H1 (cell line): ENCODE measurements at regions of chr6 and their contacts with region 1.

Region 1: DNA sequence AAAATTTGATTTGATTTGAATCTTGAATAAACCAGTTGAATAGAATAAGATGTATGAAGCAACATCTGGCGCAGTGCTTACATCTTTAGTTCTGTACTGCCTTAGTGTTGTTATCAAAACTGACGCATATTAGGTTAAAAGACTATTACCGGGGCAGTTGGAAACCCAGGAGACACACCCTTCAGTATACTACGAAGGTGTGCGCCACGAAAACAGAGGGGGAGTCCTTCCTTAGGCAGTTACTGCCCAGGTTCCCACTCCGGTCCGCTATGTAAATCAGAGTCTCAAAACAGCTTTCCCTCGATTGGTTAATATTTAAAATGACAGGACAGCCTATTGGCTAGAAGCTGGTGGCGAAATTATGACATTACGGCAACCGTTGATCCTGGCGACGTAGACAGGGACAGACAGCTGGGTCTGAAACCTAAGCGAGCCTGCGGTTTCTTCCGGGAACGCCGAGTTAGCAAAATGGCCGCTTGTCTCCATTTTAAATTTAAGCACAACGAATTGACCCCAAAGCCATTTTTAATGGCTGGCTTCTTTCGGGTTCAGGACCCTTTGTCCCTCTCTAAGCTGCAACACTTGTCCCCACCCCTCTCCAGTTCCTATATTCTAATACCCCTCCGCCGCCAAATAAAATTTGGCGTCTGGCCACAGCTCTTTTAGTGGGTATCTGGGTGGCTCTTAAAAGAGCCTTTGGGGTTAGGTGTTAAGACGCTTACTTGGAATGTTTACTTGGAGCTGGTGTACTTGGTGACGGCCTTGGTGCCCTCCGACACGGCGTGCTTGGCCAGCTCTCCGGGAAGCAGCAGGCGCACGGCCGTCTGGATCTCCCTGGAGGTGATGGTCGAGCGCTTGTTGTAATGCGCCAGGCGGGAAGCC is 35.8 kb downstream of the HFE start:
- DNase-seq: peak; percentile 84 to 95
- H3K4me3 ChIP-seq: peak overlapping the region; percentile 82 to 100 (median 98)
- H3K27ac ChIP-seq: peak overlapping the region; percentile 91
- H3K4me1 ChIP-seq: peaks cover 1 to 9% (median 4%) of the 10 kb centered on the region in 4 experiments; a peak in 4 of 7 replicates
- H3K27me3 ChIP-seq: no peaks in the 10 kb centered on the region
- CTCF ChIP-seq: no peak
- EP300 ChIP-seq: peak in 1 of 2 experiments; percentile 98; a peak in 2 of 3 replicates
- POLR2A ChIP-seq: peak; percentile 96 to 97
- RAD21 ChIP-seq: no peak

Region 2: DNA sequence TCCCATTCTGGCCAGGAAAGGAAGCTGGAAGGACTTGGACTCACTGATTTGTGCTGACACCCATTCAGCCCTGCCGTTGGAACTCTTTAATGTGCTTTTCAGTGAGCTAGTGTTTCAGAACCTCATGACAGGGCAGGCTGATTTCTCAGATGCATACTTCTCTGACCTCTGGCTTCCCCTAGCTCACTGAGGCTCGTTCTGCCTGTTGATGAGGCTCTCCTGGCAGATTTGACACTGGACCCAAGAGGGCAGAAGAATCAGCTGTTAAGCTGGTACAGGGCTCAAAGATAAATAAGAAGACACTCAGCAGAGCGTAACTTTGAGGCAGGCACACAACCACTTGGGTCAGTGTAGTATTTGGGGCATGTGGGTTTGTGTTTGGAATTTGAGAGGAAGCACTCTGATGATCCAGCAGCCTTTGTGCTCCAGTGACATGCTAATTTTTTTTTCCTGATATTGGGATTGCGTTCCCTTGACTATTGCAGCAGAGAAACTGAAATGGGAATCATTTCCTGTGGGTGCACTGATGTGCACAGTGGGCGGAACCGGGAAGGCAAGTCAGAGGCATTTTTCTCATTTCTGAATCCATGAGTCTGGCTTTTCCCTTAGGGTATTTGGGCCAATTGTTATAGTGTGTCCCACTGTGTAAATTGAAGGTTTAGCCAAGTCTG is 763.7 kb before region 1 on chr6:
- CTCF ChIA-PET with region 1: no interaction called
- POLR2A ChIA-PET with region 1: no interaction called
- DNase-seq: no peak
- H3K4me3 ChIP-seq: no peak overlapping the region
- H3K27ac ChIP-seq: no peak overlapping the region
- H3K4me1 ChIP-seq: peaks cover 3 to 12% (median 9%) of the 10 kb centered on the region in 4 experiments; a peak in 4 of 7 replicates
- H3K27me3 ChIP-seq: no peaks in the 10 kb centered on the region
- CTCF ChIP-seq: no peak
- EP300 ChIP-seq: no peak
- POLR2A ChIP-seq: no peak
- RAD21 ChIP-seq: no peak

Region 3: GRCh38 chr6:25889877-25890853 is 232.9 kb before region 1 on chr6:
- CTCF ChIA-PET with region 1: no interaction called
- POLR2A ChIA-PET with region 1: no interaction called
- DNase-seq: no peak
- H3K4me3 ChIP-seq: no peak overlapping the region
- H3K27ac ChIP-seq: no peak overlapping the region
- H3K4me1 ChIP-seq: no peaks in the 10 kb centered on the region
- H3K27me3 ChIP-seq: no peaks in the 10 kb centered on the region
- CTCF ChIP-seq: peak in 2 of 3 experiments; percentile 60 to 64; a peak in 3 of 4 replicates
- EP300 ChIP-seq: no peak
- POLR2A ChIP-seq: no peak
- RAD21 ChIP-seq: peak; percentile 90 to 92

Region 4: DNA sequence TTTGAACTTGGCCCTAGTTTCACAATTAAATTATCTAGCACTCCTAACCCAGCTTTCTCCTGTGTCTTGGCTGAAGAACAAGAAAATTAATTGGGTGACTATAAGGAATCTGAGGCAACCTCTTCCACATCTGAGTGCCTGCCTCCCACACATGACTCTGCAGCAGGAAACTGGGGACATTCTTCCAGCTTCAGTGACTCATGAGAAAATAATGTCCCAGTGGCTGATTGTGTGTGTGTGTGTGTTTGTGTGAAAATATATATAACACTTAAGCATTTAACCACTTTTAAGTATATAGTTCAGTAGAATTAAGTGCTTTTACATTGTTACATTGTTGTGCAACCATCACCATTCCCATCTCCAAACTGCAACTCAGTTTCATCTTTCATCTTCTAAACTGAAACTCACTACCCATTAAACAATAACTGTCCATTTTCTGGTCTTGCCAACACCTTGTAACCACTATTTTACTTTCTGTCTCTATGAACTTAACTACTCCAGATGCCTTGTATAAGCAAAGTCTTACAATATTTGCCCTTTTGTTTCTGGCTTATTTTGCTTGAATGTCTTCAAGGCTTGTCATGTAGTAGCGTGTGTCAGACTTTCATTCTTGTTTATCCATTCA is 151.7 kb before region 1 on chr6:
- CTCF ChIA-PET with region 1: no interaction called
- POLR2A ChIA-PET with region 1: no interaction called
- DNase-seq: no peak
- H3K4me3 ChIP-seq: no peak overlapping the region
- H3K27ac ChIP-seq: no peak overlapping the region
- H3K4me1 ChIP-seq: peaks cover 3 to 6% (median 5%) of the 10 kb centered on the region in 4 experiments; a peak in 6 of 7 replicates
- H3K27me3 ChIP-seq: no peaks in the 10 kb centered on the region; a peak in 4 of 7 replicates
- CTCF ChIP-seq: no peak
- EP300 ChIP-seq: no peak
- POLR2A ChIP-seq: no peak
- RAD21 ChIP-seq: no peak

Region 5: DNA sequence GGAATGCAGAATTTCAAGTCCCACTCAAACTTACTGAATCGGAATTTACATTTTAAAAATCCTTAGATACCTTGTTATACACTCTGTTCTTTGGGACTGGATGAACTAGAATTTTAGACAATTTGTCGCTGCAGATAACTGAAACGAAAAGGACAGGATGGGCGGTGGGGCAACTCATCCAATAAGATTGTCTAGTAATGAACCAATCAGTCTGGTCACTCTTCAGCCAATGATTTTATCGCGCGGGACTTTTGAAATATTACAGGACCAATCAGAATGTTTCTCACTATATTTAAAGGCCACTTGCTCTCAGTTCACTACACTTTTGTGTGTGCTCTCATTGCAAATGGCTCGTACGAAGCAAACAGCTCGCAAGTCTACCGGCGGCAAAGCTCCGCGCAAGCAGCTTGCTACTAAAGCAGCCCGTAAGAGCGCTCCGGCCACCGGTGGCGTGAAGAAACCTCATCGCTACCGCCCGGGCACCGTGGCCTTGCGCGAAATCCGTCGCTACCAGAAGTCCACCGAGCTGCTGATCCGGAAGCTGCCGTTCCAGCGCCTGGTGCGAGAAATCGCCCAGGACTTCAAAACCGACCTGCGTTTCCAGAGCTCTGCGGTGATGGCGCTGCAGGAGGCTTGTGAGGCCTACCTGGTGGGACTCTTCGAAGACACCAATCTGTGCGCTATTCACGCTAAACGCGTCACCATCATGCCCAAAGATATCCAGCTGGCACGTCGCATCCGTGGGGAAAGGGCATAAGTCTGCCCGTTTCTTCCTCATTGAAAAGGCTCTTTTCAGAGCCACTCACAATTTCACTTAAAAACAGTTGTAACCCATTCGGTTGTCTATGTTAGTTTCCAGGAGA is 77.7 kb before region 1 on chr6:
- CTCF ChIA-PET with region 1: no interaction called
- POLR2A ChIA-PET with region 1: interaction called, 59 read pairs
- DNase-seq: no peak
- H3K4me3 ChIP-seq: no peak overlapping the region
- H3K27ac ChIP-seq: 0 out of 2 replicates have a peak overlapping the region, but pooled peaks have one; percentile 22
- H3K4me1 ChIP-seq: peaks cover 0 to 6% (median under 1%) of the 10 kb centered on the region in 4 experiments; a peak in 1 of 7 replicates
- H3K27me3 ChIP-seq: no peaks in the 10 kb centered on the region
- CTCF ChIP-seq: peak in 1 of 3 experiments; percentile 1; a peak in 1 of 4 replicates
- EP300 ChIP-seq: no peak
- POLR2A ChIP-seq: no peak
- RAD21 ChIP-seq: no peak

Region 6: GRCh38 chr6:26141378-26141904 is 18.4 kb after region 1 on chr6:
- CTCF ChIA-PET with region 1: interaction called, 3 read pairs
- POLR2A ChIA-PET with region 1: interaction called, 124 read pairs
- DNase-seq: no peak
- H3K4me3 ChIP-seq: no peak overlapping the region
- H3K27ac ChIP-seq: no peak overlapping the region
- H3K4me1 ChIP-seq: no peaks in the 10 kb centered on the region
- H3K27me3 ChIP-seq: no peaks in the 10 kb centered on the region
- CTCF ChIP-seq: no peak
- EP300 ChIP-seq: no peak
- POLR2A ChIP-seq: no peak
- RAD21 ChIP-seq: no peak

Region 7: GRCh38 chr6:26204332-26205165 is 81.5 kb after region 1 on chr6:
- CTCF ChIA-PET with region 1: no interaction called
- POLR2A ChIA-PET with region 1: interaction called, 632 read pairs
- DNase-seq: peak; percentile 88 to 97
- H3K4me3 ChIP-seq: peak overlapping the region; percentile 64 to 94 (median 82)
- H3K27ac ChIP-seq: peak overlapping the region; percentile 98
- H3K4me1 ChIP-seq: peaks cover 0 to 15% (median 5%) of the 10 kb centered on the region in 4 experiments; a peak in 6 of 7 replicates
- H3K27me3 ChIP-seq: no peaks in the 10 kb centered on the region
- CTCF ChIP-seq: peak in 1 of 3 experiments; percentile 18; a peak in 1 of 4 replicates
- EP300 ChIP-seq: peak; percentile 13 to 95; a peak in 2 of 3 replicates
- POLR2A ChIP-seq: peak; percentile 99 to 100
- RAD21 ChIP-seq: 0 out of 4 replicates have a peak, but pooled peaks of 1 of the 2 experiments have one; percentile 14

Region 8: DNA sequence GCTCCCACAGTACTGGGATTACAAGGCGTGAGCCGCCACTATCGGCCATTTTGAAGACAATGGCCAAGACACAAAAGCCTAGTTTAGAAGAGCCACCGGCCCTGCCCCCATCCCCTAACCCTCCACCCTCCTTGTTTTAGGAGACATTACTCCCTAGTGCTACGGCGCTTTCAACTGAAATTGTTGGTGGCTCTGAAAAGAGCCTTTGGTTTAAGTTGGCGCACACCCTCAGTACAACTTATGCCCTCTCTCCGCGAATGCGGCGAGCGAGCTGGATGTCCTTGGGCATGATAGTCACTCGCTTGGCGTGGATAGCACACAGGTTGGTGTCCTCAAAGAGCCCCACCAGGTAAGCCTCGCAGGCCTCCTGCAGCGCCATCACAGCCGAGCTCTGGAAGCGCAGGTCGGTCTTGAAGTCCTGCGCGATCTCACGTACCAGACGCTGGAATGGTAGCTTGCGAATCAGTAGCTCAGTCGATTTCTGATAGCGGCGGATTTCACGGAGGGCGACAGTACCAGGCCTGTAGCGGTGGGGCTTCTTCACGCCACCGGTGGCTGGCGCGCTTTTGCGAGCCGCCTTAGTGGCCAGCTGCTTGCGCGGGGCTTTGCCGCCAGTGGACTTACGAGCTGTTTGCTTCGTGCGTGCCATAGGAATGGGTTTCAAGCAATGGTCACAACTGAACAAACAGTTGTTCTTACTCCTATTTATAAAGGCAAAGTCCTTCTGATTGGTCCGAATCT is 127.1 kb after region 1 on chr6:
- CTCF ChIA-PET with region 1: no interaction called
- POLR2A ChIA-PET with region 1: interaction called, 51 read pairs
- DNase-seq: peak in 1 of 2 experiments; percentile 73
- H3K4me3 ChIP-seq: peak overlapping the region; percentile 75 to 98 (median 90)
- H3K27ac ChIP-seq: peak overlapping the region; percentile 97
- H3K4me1 ChIP-seq: peaks cover 0 to 5% (median 4%) of the 10 kb centered on the region in 4 experiments; a peak in 5 of 7 replicates
- H3K27me3 ChIP-seq: no peaks in the 10 kb centered on the region
- CTCF ChIP-seq: peak in 2 of 3 experiments; percentile 23 to 34; a peak in 2 of 4 replicates
- EP300 ChIP-seq: 0 out of 3 replicates have a peak, but pooled peaks of 1 of the 2 experiments have one; percentile 34
- POLR2A ChIP-seq: peak; percentile 98
- RAD21 ChIP-seq: no peak

Region 9: GRCh38 chr6:27146706-27147505 is 1023.9 kb after region 1 on chr6:
- CTCF ChIA-PET with region 1: no interaction called
- POLR2A ChIA-PET with region 1: interaction called, 27 read pairs
- DNase-seq: peak; percentile 89 to 93
- H3K4me3 ChIP-seq: peak overlapping the region; percentile 60 to 86 (median 76)
- H3K27ac ChIP-seq: peak overlapping the region; percentile 98
- H3K4me1 ChIP-seq: peaks cover 0 to 11% (median 1%) of the 10 kb centered on the region in 4 experiments; a peak in 4 of 7 replicates
- H3K27me3 ChIP-seq: no peaks in the 10 kb centered on the region
- CTCF ChIP-seq: no peak
- EP300 ChIP-seq: 0 out of 3 replicates have a peak, but pooled peaks of 1 of the 2 experiments have one; percentile 16
- POLR2A ChIP-seq: peak; percentile 98 to 99
- RAD21 ChIP-seq: no peak

Region 10: GRCh38 chr6:27871924-27872638 is 1749.0 kb after region 1 on chr6:
- CTCF ChIA-PET with region 1: no interaction called
- POLR2A ChIA-PET with region 1: interaction called, 50 read pairs
- DNase-seq: peak in 1 of 2 experiments; percentile 89
- H3K4me3 ChIP-seq: peak overlapping the region; percentile 61 to 73 (median 67)
- H3K27ac ChIP-seq: peak overlapping the region; percentile 96
- H3K4me1 ChIP-seq: peaks cover 0 to 16% (median 9%) of the 10 kb centered on the region in 4 experiments; a peak in 5 of 7 replicates
- H3K27me3 ChIP-seq: no peaks in the 10 kb centered on the region
- CTCF ChIP-seq: peak in 2 of 3 experiments; percentile 22 to 26; a peak in 3 of 4 replicates
- EP300 ChIP-seq: no peak; a peak in 1 of 3 replicates
- POLR2A ChIP-seq: peak; percentile 97 to 98
- RAD21 ChIP-seq: no peak